ENCODE measurements at regions of chr16 and their contacts with region 1.

Region 1: GRCh38 chr16:83113317-83113716 is 486.5 kb downstream of the CDH13 start:
- DNase-seq: peak; percentile 47
- ATAC-seq: no peak
- H3K4me3 Mint-ChIP-seq: no peak overlapping the region
- H3K27ac Mint-ChIP-seq: no peak overlapping the region
- H3K4me1 Mint-ChIP-seq: no peaks in the 10 kb centered on the region
- H3K27me3 Mint-ChIP-seq: peaks cover 7% of the 10 kb centered on the region

Region 2: GRCh38 chr16:83158320-83158957 is 45.1 kb after region 1 on chr16:
- CTCF ChIA-PET with region 1: no interaction called
- POLR2A ChIA-PET with region 1: no interaction called
- intact Hi-C with region 1: no loop called
- DNase-seq: no peak
- ATAC-seq: no peak
- H3K4me3 Mint-ChIP-seq: no peak overlapping the region
- H3K27ac Mint-ChIP-seq: no peak overlapping the region
- H3K4me1 Mint-ChIP-seq: no peaks in the 10 kb centered on the region
- H3K27me3 Mint-ChIP-seq: no peaks in the 10 kb centered on the region

Region 3: GRCh38 chr16:83215406-83216001 is 102.2 kb after region 1 on chr16:
- CTCF ChIA-PET with region 1: no interaction called
- POLR2A ChIA-PET with region 1: no interaction called
- intact Hi-C with region 1: loop called (anchors 1 kb)
- DNase-seq: peak; percentile 79
- ATAC-seq: peak; percentile 16
- H3K4me3 Mint-ChIP-seq: no peak overlapping the region
- H3K27ac Mint-ChIP-seq: no peak overlapping the region
- H3K4me1 Mint-ChIP-seq: no peaks in the 10 kb centered on the region
- H3K27me3 Mint-ChIP-seq: no peaks in the 10 kb centered on the region

Region 4: GRCh38 chr16:83441517-83441916 is 328.2 kb after region 1 on chr16:
- CTCF ChIA-PET with region 1: no interaction called
- POLR2A ChIA-PET with region 1: no interaction called
- intact Hi-C with region 1: loop called in 1 of 2 experiments (anchors 10 kb)
- DNase-seq: no peak
- ATAC-seq: no peak
- H3K4me3 Mint-ChIP-seq: no peak overlapping the region
- H3K27ac Mint-ChIP-seq: no peak overlapping the region
- H3K4me1 Mint-ChIP-seq: no peaks in the 10 kb centered on the region
- H3K27me3 Mint-ChIP-seq: peaks cover 3% of the 10 kb centered on the region

Measured in activated CD4-positive, alpha-beta T cell treated with anti-CD3 and anti-CD28 coated beads for 36 hours (primary cell).